WTC11 (cell line): ENCODE measurements at regions of chr12 and their contacts with region 1.

Region 1: DNA sequence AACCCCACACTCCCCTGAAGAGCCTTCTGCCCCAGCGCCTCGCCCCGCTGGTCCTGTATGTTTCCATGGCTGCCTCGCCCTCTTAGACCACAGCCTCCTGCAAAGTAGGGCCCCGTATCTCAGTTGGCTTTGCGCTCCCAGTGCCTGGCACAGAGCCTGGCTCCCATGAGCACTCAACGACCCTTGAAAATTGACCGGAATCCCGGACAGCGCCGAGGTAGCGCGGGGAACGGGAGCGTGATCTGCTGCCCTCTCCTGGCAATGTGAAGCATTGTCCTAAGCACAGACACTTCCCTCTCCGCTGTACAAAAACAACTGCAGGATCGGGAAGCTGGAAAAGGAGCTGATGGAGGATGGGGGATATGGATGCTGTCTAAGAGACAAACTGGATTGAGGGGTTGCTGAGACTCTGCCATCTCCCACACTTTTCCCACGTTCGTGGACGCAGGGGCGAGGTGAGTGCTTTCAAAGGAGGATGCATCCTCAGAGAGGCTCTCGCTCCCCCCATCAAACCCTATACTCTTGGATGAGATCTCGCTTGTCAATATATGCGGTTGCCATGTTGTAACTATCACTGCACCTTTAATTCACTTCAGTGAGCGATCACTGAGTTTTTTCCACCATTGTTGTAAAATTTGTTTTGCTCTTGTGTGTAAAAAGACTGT is 10.7 kb upstream of the FKBP4 start:
- DNase-seq: peak; percentile 79
- ATAC-seq: peak; percentile 92
- H3K4me3 Mint-ChIP-seq: peak overlapping the region; percentile 23; the same call in 1 of the 2 replicates
- H3K27ac Mint-ChIP-seq: no peak overlapping the region
- H3K4me1 Mint-ChIP-seq: peaks cover 14% of the 10 kb centered on the region
- H3K27me3 Mint-ChIP-seq: peaks cover 20% of the 10 kb centered on the region
- CTCF ChIP-seq: peak; percentile 85

Region 2: DNA sequence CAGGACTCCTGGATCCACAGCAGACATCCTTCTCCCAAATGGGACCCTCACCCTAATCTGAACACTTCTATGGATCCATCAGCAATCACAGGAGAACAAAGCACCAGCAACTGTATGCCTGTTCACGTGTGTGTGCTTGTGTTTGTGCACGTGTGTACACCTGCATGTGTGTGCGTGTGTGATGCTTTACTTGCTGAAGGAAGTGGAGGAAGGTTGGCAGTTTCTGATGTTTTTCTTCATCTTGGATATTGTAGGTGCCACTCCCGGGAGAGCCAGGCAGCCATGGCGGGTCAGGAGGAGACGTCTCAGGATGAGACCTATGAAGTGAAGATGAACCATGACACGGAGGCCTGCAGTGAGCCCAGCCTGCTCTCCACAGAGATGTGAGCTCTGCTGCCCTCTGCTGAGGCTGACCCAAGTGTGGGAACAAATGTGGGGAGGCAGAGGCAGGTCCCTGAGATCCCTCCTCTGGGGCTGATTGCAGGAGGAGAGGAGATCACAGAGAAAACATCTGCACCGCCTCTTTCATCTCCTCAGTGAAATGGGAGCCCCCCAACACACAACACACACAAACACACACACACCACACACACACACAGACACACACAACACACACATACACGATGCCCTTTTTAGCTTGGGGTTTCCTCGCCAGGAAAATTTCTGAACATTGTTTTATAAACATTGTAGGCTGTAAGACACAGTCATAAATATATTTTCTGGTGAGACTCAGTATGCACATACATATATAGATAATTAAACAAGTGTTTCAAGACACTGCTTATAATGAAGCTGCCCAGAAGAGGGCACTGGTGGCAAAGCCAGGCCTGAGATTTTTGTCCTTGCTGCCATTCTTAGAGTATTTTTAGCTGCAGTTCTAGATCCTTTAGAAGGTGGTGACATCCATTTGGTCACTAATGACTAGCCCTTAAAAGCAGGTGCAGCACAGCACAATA is 101.5 kb before region 1 on chr12:
- CTCF ChIA-PET with region 1: interaction called, 19 read pairs
- POLR2A ChIA-PET with region 1: no interaction called
- DNase-seq: peak; percentile 64
- ATAC-seq: peak; percentile 72
- H3K4me3 Mint-ChIP-seq: no peak overlapping the region
- H3K27ac Mint-ChIP-seq: no peak overlapping the region
- H3K4me1 Mint-ChIP-seq: peaks cover 20% of the 10 kb centered on the region
- H3K27me3 Mint-ChIP-seq: no peaks in the 10 kb centered on the region
- CTCF ChIP-seq: no peak

Region 3: GRCh38 chr12:2733477-2734355 is 50.4 kb before region 1 on chr12:
- CTCF ChIA-PET with region 1: interaction called, 113 read pairs
- POLR2A ChIA-PET with region 1: no interaction called
- DNase-seq: no peak
- ATAC-seq: peak; percentile 70; the same call in 1 of the 2 replicates
- H3K4me3 Mint-ChIP-seq: no peak overlapping the region
- H3K27ac Mint-ChIP-seq: no peak overlapping the region
- H3K4me1 Mint-ChIP-seq: no peaks in the 10 kb centered on the region
- H3K27me3 Mint-ChIP-seq: peaks cover 14% of the 10 kb centered on the region
- CTCF ChIP-seq: no peak

Region 4: GRCh38 chr12:2739817-2740641 is 44.0 kb before region 1 on chr12:
- CTCF ChIA-PET with region 1: interaction called, 113 read pairs
- POLR2A ChIA-PET with region 1: no interaction called
- DNase-seq: no peak
- ATAC-seq: peak; percentile 27
- H3K4me3 Mint-ChIP-seq: no peak overlapping the region
- H3K27ac Mint-ChIP-seq: no peak overlapping the region
- H3K4me1 Mint-ChIP-seq: peaks cover 11% of the 10 kb centered on the region
- H3K27me3 Mint-ChIP-seq: no peaks in the 10 kb centered on the region; the same call in 1 of the 2 replicates
- CTCF ChIP-seq: 0 out of 2 replicates have a peak, but pooled peaks have one; percentile 32

Region 5: GRCh38 chr12:2752676-2753371 is 31.2 kb before region 1 on chr12:
- CTCF ChIA-PET with region 1: interaction called, 85 read pairs
- POLR2A ChIA-PET with region 1: interaction called, 4 read pairs
- DNase-seq: peak; percentile 93
- ATAC-seq: peak; percentile 87
- H3K4me3 Mint-ChIP-seq: peak overlapping the region; percentile 58; the same call in 1 of the 2 replicates
- H3K27ac Mint-ChIP-seq: no peak overlapping the region
- H3K4me1 Mint-ChIP-seq: peaks cover 62% of the 10 kb centered on the region
- H3K27me3 Mint-ChIP-seq: peaks cover 43% of the 10 kb centered on the region
- CTCF ChIP-seq: no peak

Region 6: GRCh38 chr12:2759733-2760132 is 24.3 kb before region 1 on chr12:
- CTCF ChIA-PET with region 1: interaction called, 85 read pairs
- POLR2A ChIA-PET with region 1: no interaction called
- DNase-seq: no peak
- ATAC-seq: no peak
- H3K4me3 Mint-ChIP-seq: no peak overlapping the region
- H3K27ac Mint-ChIP-seq: no peak overlapping the region
- H3K4me1 Mint-ChIP-seq: peaks cover 13% of the 10 kb centered on the region
- H3K27me3 Mint-ChIP-seq: peaks cover 6% of the 10 kb centered on the region
- CTCF ChIP-seq: no peak

Region 7: GRCh38 chr12:2794736-2795289 is 10.7 kb after region 1 on chr12 and contains the start of gene FKBP4:
- CTCF ChIA-PET with region 1: interaction called, 31 read pairs
- POLR2A ChIA-PET with region 1: interaction called, 3 read pairs
- DNase-seq: peak; percentile 93
- ATAC-seq: peak; percentile 85
- H3K4me3 Mint-ChIP-seq: peak within 1 kb of the TSS; percentile 84
- H3K27ac Mint-ChIP-seq: no peak within 1 kb of the TSS
- H3K4me1 Mint-ChIP-seq: peaks cover 36% of the 10 kb centered on the region
- H3K27me3 Mint-ChIP-seq: no peaks in the 10 kb centered on the region
- CTCF ChIP-seq: no peak
- total RNA-seq, gene FKBP4: 245 to 257 TPM (median 249 TPM) in 3 replicates

Region 8: GRCh38 chr12:2864198-2864597 is 80.1 kb after region 1 on chr12:
- CTCF ChIA-PET with region 1: no interaction called
- POLR2A ChIA-PET with region 1: no interaction called
- DNase-seq: no peak
- ATAC-seq: no peak
- H3K4me3 Mint-ChIP-seq: no peak overlapping the region
- H3K27ac Mint-ChIP-seq: no peak overlapping the region
- H3K4me1 Mint-ChIP-seq: no peaks in the 10 kb centered on the region
- H3K27me3 Mint-ChIP-seq: no peaks in the 10 kb centered on the region
- CTCF ChIP-seq: no peak

Region 9: DNA sequence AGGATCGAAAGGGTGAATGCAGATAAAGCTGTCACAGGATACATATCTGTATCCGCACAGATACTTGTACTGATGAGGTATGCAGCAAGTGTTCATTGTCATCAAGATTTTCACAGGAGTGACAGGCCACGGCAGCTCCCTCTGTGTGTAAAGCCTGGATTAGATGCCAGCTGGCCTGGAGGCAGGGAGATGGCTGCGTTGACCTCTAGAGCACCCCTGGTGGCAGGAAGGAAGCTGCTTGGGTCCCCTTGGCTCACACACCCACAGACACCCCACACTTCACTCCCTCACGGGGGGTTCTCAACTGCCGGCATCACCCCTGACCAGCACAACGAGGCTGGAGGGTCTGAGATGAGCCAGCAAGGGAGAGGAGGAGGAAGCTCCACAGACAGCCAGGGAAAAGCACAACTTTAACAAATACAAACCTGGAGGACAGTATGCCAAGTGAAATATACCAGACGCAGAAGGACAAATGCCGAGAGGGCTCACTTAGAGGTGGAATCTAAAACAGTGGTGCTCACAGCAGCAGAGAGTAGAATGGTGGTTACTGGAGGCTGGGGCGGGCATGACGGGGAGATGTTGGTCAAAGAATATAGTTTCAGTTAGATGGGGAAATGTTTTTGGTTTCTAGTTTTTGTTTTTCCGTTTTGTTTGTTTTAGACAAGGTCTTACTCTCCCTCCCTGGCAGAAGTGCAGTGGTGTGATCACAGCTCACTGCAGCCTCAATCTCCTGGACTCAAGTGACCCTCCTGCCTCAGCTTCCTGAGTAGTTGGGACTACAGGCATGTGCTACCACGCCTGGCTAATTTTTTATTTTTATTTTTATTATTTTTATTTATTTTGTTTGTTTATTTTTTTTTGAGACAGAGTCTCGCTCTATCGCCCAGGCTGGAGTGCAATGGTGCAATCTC is 220.8 kb after region 1 on chr12:
- CTCF ChIA-PET with region 1: no interaction called
- POLR2A ChIA-PET with region 1: no interaction called
- DNase-seq: no peak
- ATAC-seq: peak; percentile 40
- H3K4me3 Mint-ChIP-seq: no peak overlapping the region
- H3K27ac Mint-ChIP-seq: peak overlapping the region; percentile 82
- H3K4me1 Mint-ChIP-seq: peaks cover 20% of the 10 kb centered on the region
- H3K27me3 Mint-ChIP-seq: no peaks in the 10 kb centered on the region
- CTCF ChIP-seq: no peak